ENCODE measurements at regions of chr7 and their contacts with region 1.

Region 1: GRCh38 chr7:36677769-36678437 is 46.4 kb downstream of the AOAH start:
- DNase-seq: peak in 2 of 14 experiments; percentile 26 to 48
- ATAC-seq: peak; percentile 39
- H3K4me3 ChIP-seq: no peak overlapping the region
- H3K4me3 Mint-ChIP-seq: peak overlapping the region; percentile 76
- H3K27ac ChIP-seq: peak overlapping the region; percentile 31 to 38
- H3K27ac Mint-ChIP-seq: peak overlapping the region; percentile 90
- H3K4me1 ChIP-seq: peaks cover 15% of the 10 kb centered on the region
- H3K4me1 Mint-ChIP-seq: peaks cover 58% of the 10 kb centered on the region
- H3K27me3 ChIP-seq: no peaks in the 10 kb centered on the region
- H3K27me3 Mint-ChIP-seq: no peaks in the 10 kb centered on the region
- CTCF ChIP-seq: no peak

Region 2: GRCh38 chr7:36692456-36692855 is 14.6 kb after region 1 on chr7:
- CTCF ChIA-PET with region 1: interaction called, 3 read pairs
- POLR2A ChIA-PET with region 1: interaction called, 10 read pairs
- intact Hi-C with region 1: no loop called
- DNase-seq: peak in 1 of 14 experiments; percentile 51
- ATAC-seq: peak; percentile 37
- H3K4me3 ChIP-seq: no peak overlapping the region
- H3K4me3 Mint-ChIP-seq: peak overlapping the region; percentile 43
- H3K27ac ChIP-seq: peak overlapping the region in 1 of 2 donors; percentile 14
- H3K27ac Mint-ChIP-seq: peak overlapping the region; percentile 78
- H3K4me1 ChIP-seq: peaks cover 11% of the 10 kb centered on the region
- H3K4me1 Mint-ChIP-seq: peaks cover 48% of the 10 kb centered on the region
- H3K27me3 ChIP-seq: no peaks in the 10 kb centered on the region
- H3K27me3 Mint-ChIP-seq: no peaks in the 10 kb centered on the region
- CTCF ChIP-seq: no peak

Region 3: GRCh38 chr7:36777062-36777461 is 99.2 kb after region 1 on chr7:
- CTCF ChIA-PET with region 1: interaction called, 3 read pairs
- POLR2A ChIA-PET with region 1: interaction called, 15 read pairs
- intact Hi-C with region 1: loop called (anchors 2 to 5 kb)
- DNase-seq: peak; percentile 7 to 87 (median 38)
- ATAC-seq: peak; percentile 69
- H3K4me3 ChIP-seq: peak overlapping the region; percentile 22
- H3K4me3 Mint-ChIP-seq: peak overlapping the region; percentile 78
- H3K27ac ChIP-seq: peak overlapping the region; percentile 7 to 37
- H3K27ac Mint-ChIP-seq: peak overlapping the region; percentile 86
- H3K4me1 ChIP-seq: peaks cover 49% of the 10 kb centered on the region
- H3K4me1 Mint-ChIP-seq: peaks cover 78% of the 10 kb centered on the region
- H3K27me3 ChIP-seq: no peaks in the 10 kb centered on the region
- H3K27me3 Mint-ChIP-seq: no peaks in the 10 kb centered on the region
- CTCF ChIP-seq: no peak

Region 4: GRCh38 chr7:36784991-36785940 is 107.4 kb after region 1 on chr7:
- CTCF ChIA-PET with region 1: no interaction called
- POLR2A ChIA-PET with region 1: interaction called, 6 read pairs
- intact Hi-C with region 1: loop called (anchors 2 to 5 kb)
- DNase-seq: peak; percentile 41 to 93 (median 58)
- ATAC-seq: peak; percentile 79
- H3K4me3 ChIP-seq: no peak overlapping the region
- H3K4me3 Mint-ChIP-seq: peak overlapping the region; percentile 53
- H3K27ac ChIP-seq: peak overlapping the region; percentile 61 to 71
- H3K27ac Mint-ChIP-seq: peak overlapping the region; percentile 86
- H3K4me1 ChIP-seq: peaks cover 63% of the 10 kb centered on the region
- H3K4me1 Mint-ChIP-seq: peaks cover 82% of the 10 kb centered on the region
- H3K27me3 ChIP-seq: no peaks in the 10 kb centered on the region
- H3K27me3 Mint-ChIP-seq: no peaks in the 10 kb centered on the region
- CTCF ChIP-seq: no peak